ENCODE measurements at regions of chr4 and their contacts with region 1.

Region 1: DNA sequence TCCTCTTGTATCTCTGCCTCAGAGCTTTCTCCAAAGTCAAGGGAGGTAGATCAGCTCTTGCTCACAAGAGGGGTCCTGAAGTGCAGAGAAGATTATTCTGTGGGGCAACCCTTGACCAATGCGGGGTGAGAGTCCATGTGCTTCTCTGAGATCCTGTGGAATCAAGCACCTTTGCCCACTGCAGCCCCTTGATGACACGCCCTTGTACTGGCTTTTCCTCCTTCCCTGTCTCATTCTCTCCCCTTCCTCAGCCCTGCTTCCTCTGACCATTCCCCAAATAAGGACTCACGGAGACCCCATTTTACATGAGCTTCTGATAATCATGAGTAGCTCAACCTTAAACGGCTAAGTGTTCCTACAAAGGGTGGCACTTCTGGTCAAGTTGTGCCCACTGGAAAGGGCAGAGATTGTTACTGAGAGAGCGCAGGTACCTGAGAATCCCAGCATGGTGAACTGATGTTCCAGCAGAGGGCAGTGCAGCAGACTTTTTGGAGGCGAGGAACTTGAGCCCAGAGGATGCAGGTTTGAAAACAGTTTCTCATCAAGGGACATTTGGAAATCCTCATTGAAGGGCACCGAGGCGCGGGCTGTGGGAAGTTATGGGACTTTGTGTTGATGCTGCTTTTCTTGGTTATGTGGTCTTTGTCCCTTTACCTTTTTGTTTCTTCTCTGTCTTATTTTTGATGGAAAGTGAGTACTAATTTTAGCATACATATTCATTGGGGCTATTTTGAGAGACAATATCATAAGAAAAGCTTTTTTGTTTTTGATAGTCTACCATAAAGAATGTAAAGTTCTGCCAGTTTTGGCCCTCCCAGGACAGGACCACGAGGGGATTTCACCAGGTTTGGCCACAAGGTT is 201.3 kb downstream of the RBM46 start:
- DNase-seq: peak; percentile 31
- CTCF ChIP-seq: peak; percentile 72

Region 2: DNA sequence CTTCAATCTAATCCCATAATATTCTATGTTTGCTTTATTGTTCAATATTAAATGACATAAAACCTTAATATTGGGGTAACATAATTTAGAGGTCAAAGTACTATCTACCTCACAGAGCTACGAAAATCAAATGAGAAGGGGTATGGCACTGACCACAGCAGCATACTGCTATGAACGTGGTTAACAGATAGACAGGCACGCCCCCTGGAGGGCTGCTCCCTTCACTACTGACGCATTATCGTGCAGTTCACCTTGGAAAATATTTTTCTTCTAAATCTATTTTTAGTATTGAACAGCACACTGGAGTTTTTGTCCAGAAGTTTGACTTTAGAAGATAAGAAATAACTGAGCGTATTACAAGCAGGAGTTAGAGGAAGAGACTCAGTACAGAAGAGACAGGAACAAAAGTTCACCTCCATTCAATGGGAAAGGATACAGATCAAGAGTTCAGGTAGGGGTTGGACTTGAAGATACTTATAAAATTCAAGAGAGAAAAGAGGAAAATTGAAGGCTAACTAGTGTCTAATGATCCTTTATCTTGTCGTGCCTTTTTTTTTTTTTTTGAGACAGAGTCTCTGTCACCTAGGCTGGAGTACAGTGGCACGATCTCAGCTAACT is 371.6 kb after region 1 on chr4:
- in situ Hi-C with region 1: loop called (anchors 25 kb)
- DNase-seq: no peak
- CTCF ChIP-seq: peak; percentile 75